ENCODE measurements at regions of chr12 and their contacts with region 1.

Region 1: DNA sequence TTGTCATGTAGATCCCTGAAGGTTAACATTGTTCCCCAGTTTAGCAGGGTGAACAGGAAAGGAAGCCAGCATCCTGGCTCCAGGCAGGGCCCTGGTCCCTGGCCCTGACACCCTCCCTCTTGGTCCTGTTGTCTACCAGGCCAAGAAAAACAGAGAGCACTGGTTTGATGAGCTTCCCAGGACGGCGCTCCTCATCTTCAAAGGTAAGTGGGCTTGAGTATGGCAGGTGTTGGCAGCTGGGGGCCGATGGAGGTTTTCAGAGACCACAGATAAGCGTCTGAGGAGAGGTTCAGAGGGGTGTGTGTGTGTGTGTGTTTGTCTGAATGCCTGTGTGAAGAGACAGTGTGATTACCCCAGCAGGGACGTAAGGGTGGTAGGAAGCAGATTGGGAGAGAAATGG is 56.3 kb downstream of the SLC8B1 start:
- DNase-seq: no peak
- ATAC-seq: no peak
- H3K4me3 ChIP-seq: no peak overlapping the region
- H3K4me3 Mint-ChIP-seq: no peak overlapping the region
- H3K27ac ChIP-seq: no peak overlapping the region
- H3K27ac Mint-ChIP-seq: peak overlapping the region; percentile 19 to 34
- H3K4me1 ChIP-seq: no peaks in the 10 kb centered on the region
- H3K4me1 Mint-ChIP-seq: peaks cover 0 to 11% (median 0%) of the 10 kb centered on the region in 3 donors
- H3K27me3 ChIP-seq: no peaks in the 10 kb centered on the region
- H3K27me3 Mint-ChIP-seq: no peaks in the 10 kb centered on the region

Region 2: DNA sequence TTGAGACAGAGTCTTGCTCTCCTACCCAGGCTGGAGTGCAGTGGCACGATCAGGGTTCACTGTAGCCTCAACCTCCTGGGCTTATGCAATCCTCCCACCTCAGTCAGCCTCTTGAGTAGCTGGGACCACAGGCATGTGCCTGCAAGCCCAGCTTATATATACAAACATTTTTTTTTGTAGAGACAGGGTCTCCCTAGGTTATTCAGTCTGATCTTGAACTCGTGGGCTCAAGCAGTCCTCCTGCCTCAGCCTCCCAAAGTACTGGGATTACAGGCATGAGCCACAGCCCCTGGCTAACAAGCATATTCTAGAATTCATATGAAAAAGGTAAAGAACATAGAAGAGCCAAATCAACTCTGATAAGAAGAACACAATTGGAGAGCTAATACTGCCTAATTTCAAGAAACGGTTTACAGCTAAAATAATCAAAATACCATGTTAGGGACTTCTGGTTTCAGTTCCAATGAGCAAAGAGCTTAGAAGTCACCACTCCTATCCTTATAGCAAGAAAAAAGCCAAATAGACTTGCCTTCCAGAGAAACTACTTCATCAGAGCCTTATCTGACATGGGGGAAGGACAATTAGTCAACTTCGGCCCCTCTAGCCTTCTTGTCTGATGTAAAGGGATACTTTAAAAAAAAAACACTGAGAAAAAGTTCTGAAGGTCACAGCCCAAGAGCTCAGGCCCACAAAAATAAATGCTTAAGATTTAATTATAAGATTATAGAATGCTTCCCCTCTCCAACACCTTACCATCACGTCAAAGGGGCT is 1303.3 kb before region 1 on chr12:
- CTCF ChIA-PET with region 1: no interaction called
- POLR2A ChIA-PET with region 1: no interaction called
- DNase-seq: no peak
- ATAC-seq: no peak
- H3K4me3 ChIP-seq: no peak overlapping the region
- H3K4me3 Mint-ChIP-seq: no peak overlapping the region
- H3K27ac ChIP-seq: no peak overlapping the region
- H3K27ac Mint-ChIP-seq: peak overlapping the region; percentile 75 to 76
- H3K4me1 ChIP-seq: peaks cover 0 to 7% of the 10 kb centered on the region in 2 experiments
- H3K4me1 Mint-ChIP-seq: peaks cover 35 to 47% (median 38%) of the 10 kb centered on the region in 3 donors
- H3K27me3 ChIP-seq: no peaks in the 10 kb centered on the region
- H3K27me3 Mint-ChIP-seq: no peaks in the 10 kb centered on the region

Region 3: DNA sequence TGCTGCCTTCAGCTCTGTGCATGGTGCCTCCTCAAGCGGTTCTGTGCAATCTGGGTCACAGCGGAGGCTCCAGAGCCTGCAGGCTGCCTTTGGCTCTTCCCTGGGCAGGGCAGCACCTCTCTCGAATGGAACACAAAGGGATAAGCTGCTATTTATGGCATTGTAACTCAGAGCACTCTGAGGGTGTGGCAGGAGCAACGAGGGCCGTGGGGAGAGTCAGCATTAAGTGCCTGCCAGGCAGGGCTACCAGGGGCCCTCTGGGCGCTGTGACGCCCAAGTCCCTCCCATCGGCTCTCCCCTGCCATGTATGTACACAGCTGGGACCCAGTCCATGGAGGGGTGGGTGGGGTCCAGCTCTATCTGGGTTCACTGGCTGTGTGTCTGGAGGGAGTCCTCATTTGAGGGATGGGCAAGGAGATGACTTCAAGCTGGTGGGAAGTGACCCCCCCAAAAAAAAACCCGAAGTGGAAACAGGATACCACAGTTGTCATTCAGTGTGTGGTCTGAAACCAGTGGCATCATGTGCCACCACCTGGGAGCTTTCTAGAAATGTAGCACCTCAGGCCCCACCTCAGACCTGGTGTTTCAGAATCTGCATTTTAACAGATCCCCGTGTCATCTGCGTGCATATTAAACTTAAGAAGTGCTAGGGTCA is 415.9 kb before region 1 on chr12:
- CTCF ChIA-PET with region 1: no interaction called
- POLR2A ChIA-PET with region 1: interaction called in 1 of 2 experiments, 10 read pairs
- DNase-seq: no peak
- ATAC-seq: no peak
- H3K4me3 ChIP-seq: no peak overlapping the region
- H3K4me3 Mint-ChIP-seq: no peak overlapping the region
- H3K27ac ChIP-seq: no peak overlapping the region
- H3K27ac Mint-ChIP-seq: no peak overlapping the region
- H3K4me1 ChIP-seq: no peaks in the 10 kb centered on the region
- H3K4me1 Mint-ChIP-seq: peaks cover 0 to 2% (median 0%) of the 10 kb centered on the region in 3 donors
- H3K27me3 ChIP-seq: peaks cover 0 to 15% of the 10 kb centered on the region in 2 experiments
- H3K27me3 Mint-ChIP-seq: peaks cover 46 to 54% of the 10 kb centered on the region in 2 donors

Region 4: DNA sequence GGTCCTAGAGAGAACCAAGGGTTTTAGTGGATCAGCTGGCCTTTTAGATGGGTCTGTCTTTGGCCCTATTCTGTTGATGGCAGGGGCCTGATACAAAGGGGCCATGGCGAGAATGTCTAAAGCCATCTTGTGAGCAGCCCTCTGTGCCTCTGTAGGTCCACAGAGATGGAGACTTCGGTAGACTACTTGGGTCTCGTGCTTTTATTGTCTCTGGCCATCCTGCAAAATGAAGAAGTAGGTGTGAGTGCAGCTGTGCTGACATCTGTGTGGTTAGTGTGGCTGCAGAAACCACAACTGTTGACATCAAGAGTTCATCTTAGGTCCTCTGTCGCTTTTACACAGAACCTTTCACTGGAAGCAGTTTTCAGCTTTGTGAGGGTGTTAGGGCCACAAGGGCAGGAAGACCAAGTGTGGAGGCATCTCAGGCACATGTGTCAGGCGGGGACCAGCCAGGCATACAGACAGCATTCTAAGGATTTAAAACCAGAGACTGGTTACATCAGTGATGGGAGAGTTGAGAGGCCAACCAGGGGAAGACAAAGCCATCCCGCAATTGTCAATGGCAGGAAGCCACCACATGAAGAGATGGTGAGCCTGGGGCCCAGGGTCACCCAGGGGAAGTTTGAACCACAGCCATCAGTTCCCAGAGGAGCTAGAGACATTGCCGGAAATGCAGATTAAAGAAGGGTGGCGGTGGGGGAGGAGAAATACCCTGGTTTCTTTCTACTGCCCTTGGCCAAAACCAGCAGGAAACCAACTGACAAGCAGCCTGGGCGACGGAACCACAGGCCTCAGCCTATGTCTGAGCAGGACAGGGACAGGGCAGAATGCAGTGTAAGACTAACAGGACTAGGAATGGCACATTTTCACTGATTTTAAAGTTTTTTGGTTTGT is 70.3 kb before region 1 on chr12:
- CTCF ChIA-PET with region 1: no interaction called
- POLR2A ChIA-PET with region 1: no interaction called
- DNase-seq: peak; percentile 5 to 88 (median 50)
- ATAC-seq: peak; percentile 74 to 82 (median 80)
- H3K4me3 ChIP-seq: no peak overlapping the region
- H3K4me3 Mint-ChIP-seq: peak overlapping the region; percentile 54 to 77 (median 59)
- H3K27ac ChIP-seq: peak overlapping the region; percentile 81
- H3K27ac Mint-ChIP-seq: peak overlapping the region; percentile 94 to 97
- H3K4me1 ChIP-seq: peaks cover 25 to 48% of the 10 kb centered on the region in 2 experiments
- H3K4me1 Mint-ChIP-seq: peaks cover 40 to 53% (median 46%) of the 10 kb centered on the region in 3 donors
- H3K27me3 ChIP-seq: no peaks in the 10 kb centered on the region
- H3K27me3 Mint-ChIP-seq: no peaks in the 10 kb centered on the region